Body of pancreas (tissue), 4 donors: ENCODE measurements at regions of chr6 and their contacts with region 1.

Region 1: GRCh38 chr6:32833664-32834063 is 4.9 kb downstream of the TAP2 start:
- DNase-seq: no peak
- ATAC-seq: no peak
- H3K4me3 ChIP-seq: no peak overlapping the region
- H3K27ac ChIP-seq: no peak overlapping the region
- H3K4me1 ChIP-seq: peaks cover 8% of the 10 kb centered on the region
- H3K27me3 ChIP-seq: no peaks in the 10 kb centered on the region
- CTCF ChIP-seq: no peak
- POLR2A ChIP-seq: no peak

Region 2: GRCh38 chr6:32868257-32868788 is 34.7 kb after region 1 on chr6:
- intact Hi-C with region 1: loop called (anchors 5 kb)
- DNase-seq: peak; percentile 79 to 86 (median 84)
- ATAC-seq: peak; percentile 71
- H3K4me3 ChIP-seq: no peak overlapping the region
- H3K27ac ChIP-seq: no peak overlapping the region
- H3K4me1 ChIP-seq: no peaks in the 10 kb centered on the region
- H3K27me3 ChIP-seq: no peaks in the 10 kb centered on the region
- CTCF ChIP-seq: peak; percentile 74 to 98 (median 93)
- POLR2A ChIP-seq: no peak